ENCODE measurements at regions of chr4 and their contacts with region 1.

Region 1: DNA sequence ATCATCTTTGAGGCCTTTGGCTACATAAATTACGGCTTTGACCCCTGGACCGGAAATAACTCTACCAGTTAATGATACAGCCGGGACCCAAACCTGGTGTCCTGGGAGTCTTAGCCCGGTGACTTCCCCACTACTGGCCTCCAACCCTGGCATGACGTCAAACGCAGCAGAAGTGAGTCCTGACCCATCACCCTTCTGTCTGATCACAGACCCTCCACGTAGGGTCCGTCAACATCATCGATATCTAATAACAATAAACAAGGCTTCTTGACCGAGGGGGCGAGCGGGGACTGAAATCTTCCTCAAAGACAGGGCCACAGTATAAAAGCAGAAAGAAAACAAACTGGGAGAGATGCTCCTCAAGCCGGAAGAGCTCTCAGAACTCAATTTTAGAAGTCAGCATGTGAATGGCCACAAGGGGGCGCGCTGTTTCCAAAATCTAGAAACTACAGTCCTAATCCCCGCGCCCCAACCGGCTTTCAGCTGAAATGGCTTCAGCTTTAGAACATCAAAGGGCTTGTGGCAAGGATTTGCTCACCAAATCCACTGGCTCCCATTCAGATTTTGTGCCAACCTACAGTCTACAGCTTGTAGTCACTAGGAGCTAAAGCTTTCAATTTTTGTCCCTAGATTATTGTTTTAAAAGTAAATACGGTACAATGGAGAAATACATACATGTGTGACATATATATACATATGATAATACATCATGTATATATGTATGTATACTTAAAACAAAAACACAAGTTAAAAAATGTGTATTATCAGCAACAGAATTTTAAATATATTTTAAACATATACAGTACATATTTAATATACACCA is 46.4 kb upstream of the ENPP6 start:
- DNase-seq: peak; percentile 95
- H3K4me3 Mint-ChIP-seq: no peak overlapping the region
- H3K27ac Mint-ChIP-seq: no peak overlapping the region
- H3K4me1 Mint-ChIP-seq: peaks cover 11% of the 10 kb centered on the region
- H3K27me3 Mint-ChIP-seq: no peaks in the 10 kb centered on the region
- CTCF ChIP-seq: peak; percentile 78

Region 2: DNA sequence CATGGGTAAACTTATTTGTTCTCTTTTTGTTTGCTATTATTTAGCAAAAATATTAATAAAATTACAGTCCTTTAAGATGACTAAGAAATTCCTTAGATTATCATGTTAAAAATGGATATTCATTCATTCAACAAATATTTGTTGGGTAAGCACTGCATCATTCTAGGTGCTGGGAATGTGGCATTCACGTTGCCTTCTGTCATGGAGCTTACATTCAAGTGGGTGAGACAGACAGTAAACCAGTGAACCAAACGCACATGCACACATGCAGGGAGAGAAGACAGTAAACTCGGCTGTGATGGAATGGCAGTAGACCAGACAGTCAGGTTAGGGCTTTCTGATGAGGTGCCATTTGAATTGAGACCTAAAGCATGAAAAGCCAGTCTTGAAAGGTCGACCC is 267.3 kb before region 1 on chr4:
- CTCF ChIA-PET with region 1: no interaction called
- POLR2A ChIA-PET with region 1: no interaction called
- intact Hi-C with region 1: no loop called
- DNase-seq: no peak
- H3K4me3 Mint-ChIP-seq: no peak overlapping the region
- H3K27ac Mint-ChIP-seq: no peak overlapping the region
- H3K4me1 Mint-ChIP-seq: no peaks in the 10 kb centered on the region
- H3K27me3 Mint-ChIP-seq: no peaks in the 10 kb centered on the region
- CTCF ChIP-seq: no peak

Region 3: GRCh38 chr4:184282251-184282713 is 18.2 kb after region 1 on chr4:
- CTCF ChIA-PET with region 1: interaction called, 34 read pairs
- POLR2A ChIA-PET with region 1: interaction called, 6 read pairs
- intact Hi-C with region 1: loop called (anchors 2 kb)
- DNase-seq: peak; percentile 47
- H3K4me3 Mint-ChIP-seq: no peak overlapping the region
- H3K27ac Mint-ChIP-seq: no peak overlapping the region
- H3K4me1 Mint-ChIP-seq: no peaks in the 10 kb centered on the region
- H3K27me3 Mint-ChIP-seq: no peaks in the 10 kb centered on the region
- CTCF ChIP-seq: no peak

Region 4: DNA sequence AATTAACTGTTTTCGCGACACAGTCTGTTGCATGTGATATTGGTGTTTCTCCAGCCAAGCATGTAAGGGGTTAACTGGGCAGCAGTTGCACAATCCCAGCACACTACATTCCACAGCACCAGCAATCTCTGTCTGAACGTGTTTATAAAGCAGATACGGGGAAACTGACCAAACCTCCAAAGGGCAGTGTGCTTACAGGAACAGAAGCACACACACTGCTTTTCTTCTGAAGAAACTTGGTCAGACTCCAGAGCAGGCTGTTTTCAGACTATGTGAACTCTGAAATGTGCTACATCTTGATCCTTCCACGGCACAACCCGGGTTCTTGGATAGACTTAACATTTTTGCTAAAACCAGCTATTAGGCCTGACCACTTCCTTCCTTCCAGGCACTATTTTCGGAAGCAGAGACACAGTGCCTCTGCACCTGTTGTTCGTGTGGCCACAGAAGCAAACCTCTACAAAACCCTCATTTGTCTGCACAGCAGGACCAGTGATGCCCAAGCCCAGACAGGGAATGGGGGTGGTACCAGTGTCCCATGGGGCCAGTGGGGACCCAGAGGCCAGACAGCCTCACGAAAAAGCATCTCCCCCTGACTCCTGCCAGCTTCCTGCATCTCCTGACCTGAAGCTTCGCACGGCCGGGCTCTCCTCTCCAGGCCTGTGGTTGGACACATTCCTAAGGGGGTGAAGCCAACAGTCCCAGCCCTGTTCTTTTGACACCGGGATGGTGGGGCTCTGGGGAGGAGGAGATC is 120.1 kb after region 1 on chr4:
- CTCF ChIA-PET with region 1: interaction called, 13 read pairs
- POLR2A ChIA-PET with region 1: interaction called, 21 read pairs
- intact Hi-C with region 1: loop called (anchors 1 kb)
- DNase-seq: peak; percentile 95
- H3K4me3 Mint-ChIP-seq: peak overlapping the region; percentile 68
- H3K27ac Mint-ChIP-seq: peak overlapping the region; percentile 75
- H3K4me1 Mint-ChIP-seq: peaks cover 28% of the 10 kb centered on the region
- H3K27me3 Mint-ChIP-seq: no peaks in the 10 kb centered on the region
- CTCF ChIP-seq: no peak

Region 5: GRCh38 chr4:184474263-184475095 is 210.4 kb after region 1 on chr4 and contains the start of gene IRF2:
- CTCF ChIA-PET with region 1: interaction called, 4 read pairs
- POLR2A ChIA-PET with region 1: interaction called, 18 read pairs
- intact Hi-C with region 1: loop called (anchors 1 kb)
- DNase-seq: peak; percentile 98
- H3K4me3 Mint-ChIP-seq: peak within 1 kb of the TSS; percentile 99
- H3K27ac Mint-ChIP-seq: peak within 1 kb of the TSS; percentile 98
- H3K4me1 Mint-ChIP-seq: peaks cover 23% of the 10 kb centered on the region
- H3K27me3 Mint-ChIP-seq: no peaks in the 10 kb centered on the region
- CTCF ChIP-seq: no peak
- total RNA-seq, gene IRF2: 20.8 and 29.0 TPM in 2 replicates

Region 6: GRCh38 chr4:184548648-184549341 is 284.7 kb after region 1 on chr4:
- CTCF ChIA-PET with region 1: interaction called, 11 read pairs
- POLR2A ChIA-PET with region 1: interaction called, 3 read pairs
- intact Hi-C with region 1: no loop called
- DNase-seq: no peak
- H3K4me3 Mint-ChIP-seq: no peak overlapping the region
- H3K27ac Mint-ChIP-seq: no peak overlapping the region
- H3K4me1 Mint-ChIP-seq: no peaks in the 10 kb centered on the region
- H3K27me3 Mint-ChIP-seq: no peaks in the 10 kb centered on the region
- CTCF ChIP-seq: no peak

Region 7: DNA sequence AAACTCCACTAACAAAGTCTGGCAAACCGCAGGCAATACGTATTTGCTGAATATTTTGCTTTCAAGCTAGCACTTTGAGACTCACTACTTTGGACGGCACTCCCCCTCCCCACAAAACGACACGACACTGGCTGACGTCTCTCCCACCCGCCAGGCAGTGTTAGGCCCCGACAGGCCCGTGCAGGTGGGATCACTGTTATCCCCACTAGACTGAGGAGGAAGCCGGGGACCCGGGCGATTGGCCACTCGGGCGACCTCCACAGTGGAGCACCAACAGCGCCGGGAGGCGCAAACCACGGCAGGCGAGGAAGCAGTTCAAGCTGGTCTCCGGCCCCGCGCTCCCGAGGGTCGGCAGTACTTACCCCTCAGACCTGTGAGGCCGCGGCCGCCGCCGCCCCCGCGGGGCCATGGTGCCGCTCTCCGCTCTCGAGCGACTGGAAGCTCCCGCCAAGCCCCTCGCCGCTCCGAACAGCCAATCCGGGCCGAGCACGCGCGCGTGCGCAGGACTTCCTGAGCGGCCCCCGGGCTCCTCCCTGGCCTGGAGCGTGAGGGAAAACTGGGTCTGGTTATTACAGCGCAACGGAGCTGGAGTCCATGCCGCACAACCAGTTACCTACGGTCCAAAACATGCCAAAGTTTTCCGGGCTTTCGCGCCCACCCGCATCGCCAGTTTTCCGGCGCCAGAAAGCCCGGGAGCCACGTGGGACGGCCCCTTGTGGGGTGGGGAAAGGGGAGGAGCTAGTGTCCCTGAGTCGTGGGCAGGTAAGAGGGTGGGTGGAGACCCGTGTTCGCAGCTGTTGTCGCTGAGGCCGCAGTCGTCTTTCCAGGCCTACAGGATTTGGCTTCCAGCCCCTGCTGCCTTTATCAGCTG is 469.8 kb after region 1 on chr4 and contains the start of gene CENPU:
- CTCF ChIA-PET with region 1: no interaction called
- POLR2A ChIA-PET with region 1: interaction called, 5 read pairs
- intact Hi-C with region 1: loop called (anchors 10 kb)
- DNase-seq: peak; percentile 98
- H3K4me3 Mint-ChIP-seq: peak within 1 kb of the TSS; percentile 87
- H3K27ac Mint-ChIP-seq: peak within 1 kb of the TSS; percentile 73
- H3K4me1 Mint-ChIP-seq: peaks cover 26% of the 10 kb centered on the region
- H3K27me3 Mint-ChIP-seq: no peaks in the 10 kb centered on the region
- CTCF ChIP-seq: no peak
- total RNA-seq, gene CENPU: 8.3 and 22.3 TPM in 2 replicates

Region 8: GRCh38 chr4:185134307-185134869 is 870.3 kb after region 1 on chr4:
- CTCF ChIA-PET with region 1: no interaction called
- POLR2A ChIA-PET with region 1: no interaction called
- intact Hi-C with region 1: loop called (anchors 10 kb)
- DNase-seq: peak; percentile 61
- H3K4me3 Mint-ChIP-seq: no peak overlapping the region
- H3K27ac Mint-ChIP-seq: no peak overlapping the region
- H3K4me1 Mint-ChIP-seq: no peaks in the 10 kb centered on the region
- H3K27me3 Mint-ChIP-seq: no peaks in the 10 kb centered on the region
- CTCF ChIP-seq: peak; percentile 64